ENCODE measurements at regions of chr1 and their contacts with region 1.

Region 1: DNA sequence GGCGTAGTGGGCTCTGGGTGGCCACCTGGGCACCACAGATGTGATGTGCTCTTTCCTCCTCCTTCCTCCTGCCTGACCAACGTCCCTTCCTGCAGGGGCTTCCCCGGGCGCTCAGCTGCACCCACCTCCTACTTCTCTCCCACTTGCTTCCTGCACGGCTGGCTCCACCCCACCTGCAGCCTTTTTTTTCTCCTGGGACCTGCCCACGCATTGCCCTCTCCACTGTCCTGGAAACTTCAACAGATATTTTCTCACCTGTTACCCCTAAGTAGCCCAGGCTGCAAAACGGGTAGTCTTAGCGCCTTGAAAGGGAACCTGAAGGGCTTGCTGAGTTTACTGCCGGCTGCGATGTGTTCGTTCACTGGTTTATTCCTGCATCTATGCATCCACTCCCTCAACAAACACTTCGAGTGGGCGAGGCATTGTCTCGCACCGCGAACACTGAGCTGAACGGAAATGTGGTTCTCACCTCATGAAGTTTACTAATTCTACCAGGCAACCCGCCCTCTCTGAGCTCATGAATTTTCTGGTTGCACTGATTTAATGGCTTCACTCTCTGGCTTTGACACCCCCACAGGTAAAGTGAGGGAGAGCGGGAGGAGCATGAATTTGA is 23.6 kb downstream of the ZBTB18 start:
- DNase-seq: peak; percentile 51
- H3K4me3 ChIP-seq: peak overlapping the region in 1 of 4 donors; percentile 25
- H3K27ac ChIP-seq: no peak overlapping the region
- H3K4me1 ChIP-seq: peaks cover 0 to 14% (median 7%) of the 10 kb centered on the region in 4 donors
- H3K27me3 ChIP-seq: no peaks in the 10 kb centered on the region
- CTCF ChIP-seq: no peak
- EP300 ChIP-seq: no peak
- POLR2A ChIP-seq: no peak

Region 2: DNA sequence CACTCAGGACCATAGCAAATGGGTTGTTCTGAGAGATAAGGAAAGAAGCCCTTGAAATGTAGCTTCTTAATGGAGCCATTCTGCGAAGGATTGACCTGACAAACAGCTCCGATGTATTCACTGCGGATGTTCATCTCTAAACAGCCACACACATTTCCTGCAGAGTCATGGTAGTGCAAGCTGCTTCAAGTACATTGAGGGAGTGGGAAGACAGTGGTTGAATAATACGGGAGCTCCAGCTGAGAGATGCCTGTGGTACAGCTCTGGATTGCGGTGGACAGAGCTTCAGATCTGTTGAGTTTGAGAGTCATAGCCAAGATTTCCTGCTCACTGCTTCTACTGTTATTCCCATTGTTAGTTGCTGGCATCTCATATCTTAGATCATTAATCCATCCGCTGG is 63.1 kb after region 1 on chr1:
- in situ Hi-C with region 1: no loop called
- intact Hi-C with region 1: loop called (anchors 2 kb)
- DNase-seq: no peak
- H3K4me3 ChIP-seq: no peak overlapping the region
- H3K27ac ChIP-seq: no peak overlapping the region
- H3K4me1 ChIP-seq: no peaks in the 10 kb centered on the region
- H3K27me3 ChIP-seq: no peaks in the 10 kb centered on the region
- CTCF ChIP-seq: no peak
- EP300 ChIP-seq: no peak
- POLR2A ChIP-seq: no peak

Region 3: DNA sequence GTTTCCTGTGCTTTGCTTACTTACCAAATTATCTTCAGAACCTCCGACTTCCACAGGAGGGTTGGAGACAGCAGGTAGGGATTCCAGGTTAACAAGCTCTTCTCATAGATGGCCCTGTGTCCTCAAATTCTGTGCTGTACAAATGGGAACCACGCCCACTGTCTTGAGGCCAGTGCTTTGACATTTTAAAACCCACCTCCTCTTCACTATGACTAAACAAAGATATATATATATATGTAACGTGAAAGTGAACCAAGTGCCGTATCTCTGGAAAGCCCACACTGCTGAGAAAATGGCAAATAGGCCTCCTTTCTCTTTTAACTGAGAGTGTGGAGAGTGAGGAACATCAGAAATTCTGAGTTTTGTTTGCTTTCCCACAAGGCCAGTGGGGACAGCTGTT is 76.0 kb after region 1 on chr1:
- in situ Hi-C with region 1: no loop called
- intact Hi-C with region 1: no loop called
- DNase-seq: no peak
- H3K4me3 ChIP-seq: no peak overlapping the region
- H3K27ac ChIP-seq: no peak overlapping the region
- H3K4me1 ChIP-seq: peaks cover 0 to 11% (median 0%) of the 10 kb centered on the region in 4 donors
- H3K27me3 ChIP-seq: no peaks in the 10 kb centered on the region
- CTCF ChIP-seq: no peak
- EP300 ChIP-seq: no peak
- POLR2A ChIP-seq: no peak

Region 4: GRCh38 chr1:244371242-244372141 is 296.8 kb after region 1 on chr1:
- in situ Hi-C with region 1: no loop called
- intact Hi-C with region 1: no loop called
- DNase-seq: no peak
- H3K4me3 ChIP-seq: no peak overlapping the region
- H3K27ac ChIP-seq: no peak overlapping the region
- H3K4me1 ChIP-seq: peaks cover 0 to 5% (median 0%) of the 10 kb centered on the region in 4 donors
- H3K27me3 ChIP-seq: no peaks in the 10 kb centered on the region
- CTCF ChIP-seq: no peak
- EP300 ChIP-seq: no peak
- POLR2A ChIP-seq: no peak

Measured in transverse colon (tissue), 4 donors.